Activated B cell treated with CpG ODN at 0.5 μM for 24 hours (primary cell): ENCODE measurements at regions of chr13 and their contacts with region 1.

Region 1: GRCh38 chr13:99269627-99270241 is 11.6 kb upstream of the GPR18 start:
- DNase-seq: no peak
- ATAC-seq: peak; percentile 70
- H3K4me3 Mint-ChIP-seq: no peak overlapping the region
- H3K27ac Mint-ChIP-seq: peak overlapping the region; percentile 74
- H3K4me1 Mint-ChIP-seq: peaks cover 65% of the 10 kb centered on the region
- H3K27me3 Mint-ChIP-seq: no peaks in the 10 kb centered on the region
- CTCF ChIP-seq: peak; percentile 48

Region 2: GRCh38 chr13:98842864-98843481 is 426.8 kb before region 1 on chr13:
- CTCF ChIA-PET with region 1: interaction called, 19 read pairs
- POLR2A ChIA-PET with region 1: no interaction called
- intact Hi-C with region 1: loop called (anchors 1 kb)
- DNase-seq: peak; percentile 34
- ATAC-seq: peak; percentile 86
- H3K4me3 Mint-ChIP-seq: no peak overlapping the region
- H3K27ac Mint-ChIP-seq: no peak overlapping the region
- H3K4me1 Mint-ChIP-seq: no peaks in the 10 kb centered on the region
- H3K27me3 Mint-ChIP-seq: no peaks in the 10 kb centered on the region
- CTCF ChIP-seq: peak; percentile 37

Region 3: GRCh38 chr13:98927951-98928927 is 341.5 kb before region 1 on chr13:
- CTCF ChIA-PET with region 1: no interaction called
- POLR2A ChIA-PET with region 1: no interaction called
- intact Hi-C with region 1: no loop called
- DNase-seq: no peak
- ATAC-seq: no peak
- H3K4me3 Mint-ChIP-seq: no peak overlapping the region
- H3K27ac Mint-ChIP-seq: no peak overlapping the region
- H3K4me1 Mint-ChIP-seq: peaks cover 7% of the 10 kb centered on the region
- H3K27me3 Mint-ChIP-seq: no peaks in the 10 kb centered on the region
- CTCF ChIP-seq: no peak

Region 4: DNA sequence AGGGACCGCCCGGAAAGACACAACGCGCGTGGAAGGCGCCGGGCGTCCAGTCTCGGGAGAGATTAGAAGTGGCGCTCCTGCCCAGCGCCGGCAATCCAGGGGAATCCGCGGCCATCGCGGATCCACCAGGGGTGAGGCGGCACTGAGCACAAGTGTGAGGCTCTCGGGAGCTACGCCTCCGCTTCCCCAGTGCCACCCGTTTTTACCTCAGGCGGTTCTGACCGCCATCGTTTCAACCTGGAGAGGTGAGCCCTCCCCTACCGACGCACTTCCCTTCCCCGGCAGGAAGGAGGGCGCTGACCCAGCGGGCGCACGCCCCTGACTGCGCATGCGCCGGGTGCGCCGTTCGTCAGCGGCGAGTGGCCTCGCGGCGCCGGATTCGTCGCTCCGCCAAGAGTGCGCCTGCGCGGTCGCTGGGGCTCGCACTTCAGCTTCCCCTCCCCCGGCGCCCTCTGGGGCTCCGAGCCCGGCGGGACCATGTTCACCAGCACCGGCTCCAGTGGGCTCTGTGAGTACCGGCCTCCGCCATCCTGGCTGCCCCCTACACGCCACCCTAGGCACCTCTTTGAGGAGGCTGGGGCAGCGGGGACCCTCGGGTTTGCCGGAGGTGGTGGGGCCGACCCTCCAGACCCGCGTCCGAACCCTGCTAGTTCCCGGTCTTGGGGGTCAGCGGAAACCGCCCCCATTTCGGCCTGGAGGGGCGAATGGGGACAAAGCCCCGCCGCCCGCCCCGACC is 69.1 kb before region 1 on chr13 and contains the start of gene UBAC2:
- CTCF ChIA-PET with region 1: interaction called, 157 read pairs
- POLR2A ChIA-PET with region 1: interaction called, 77 read pairs
- intact Hi-C with region 1: loop called (anchors 1 kb)
- DNase-seq: peak; percentile 98
- ATAC-seq: peak; percentile 74
- H3K4me3 Mint-ChIP-seq: peak within 1 kb of the TSS; percentile 95
- H3K27ac Mint-ChIP-seq: peak within 1 kb of the TSS; percentile 94
- H3K4me1 Mint-ChIP-seq: peaks cover 59% of the 10 kb centered on the region
- H3K27me3 Mint-ChIP-seq: no peaks in the 10 kb centered on the region
- CTCF ChIP-seq: no peak
- total RNA-seq, gene UBAC2: 40.6 and 51.0 TPM in 2 replicates

Region 5: GRCh38 chr13:99301913-99302636 is 32.3 kb after region 1 on chr13:
- CTCF ChIA-PET with region 1: interaction called, 43 read pairs
- POLR2A ChIA-PET with region 1: interaction called, 22 read pairs
- intact Hi-C with region 1: loop called (anchors 1 kb)
- DNase-seq: no peak
- ATAC-seq: peak; percentile 56
- H3K4me3 Mint-ChIP-seq: peak overlapping the region; percentile 95
- H3K27ac Mint-ChIP-seq: peak overlapping the region; percentile 93
- H3K4me1 Mint-ChIP-seq: peaks cover 83% of the 10 kb centered on the region
- H3K27me3 Mint-ChIP-seq: no peaks in the 10 kb centered on the region
- CTCF ChIP-seq: no peak

Region 6: DNA sequence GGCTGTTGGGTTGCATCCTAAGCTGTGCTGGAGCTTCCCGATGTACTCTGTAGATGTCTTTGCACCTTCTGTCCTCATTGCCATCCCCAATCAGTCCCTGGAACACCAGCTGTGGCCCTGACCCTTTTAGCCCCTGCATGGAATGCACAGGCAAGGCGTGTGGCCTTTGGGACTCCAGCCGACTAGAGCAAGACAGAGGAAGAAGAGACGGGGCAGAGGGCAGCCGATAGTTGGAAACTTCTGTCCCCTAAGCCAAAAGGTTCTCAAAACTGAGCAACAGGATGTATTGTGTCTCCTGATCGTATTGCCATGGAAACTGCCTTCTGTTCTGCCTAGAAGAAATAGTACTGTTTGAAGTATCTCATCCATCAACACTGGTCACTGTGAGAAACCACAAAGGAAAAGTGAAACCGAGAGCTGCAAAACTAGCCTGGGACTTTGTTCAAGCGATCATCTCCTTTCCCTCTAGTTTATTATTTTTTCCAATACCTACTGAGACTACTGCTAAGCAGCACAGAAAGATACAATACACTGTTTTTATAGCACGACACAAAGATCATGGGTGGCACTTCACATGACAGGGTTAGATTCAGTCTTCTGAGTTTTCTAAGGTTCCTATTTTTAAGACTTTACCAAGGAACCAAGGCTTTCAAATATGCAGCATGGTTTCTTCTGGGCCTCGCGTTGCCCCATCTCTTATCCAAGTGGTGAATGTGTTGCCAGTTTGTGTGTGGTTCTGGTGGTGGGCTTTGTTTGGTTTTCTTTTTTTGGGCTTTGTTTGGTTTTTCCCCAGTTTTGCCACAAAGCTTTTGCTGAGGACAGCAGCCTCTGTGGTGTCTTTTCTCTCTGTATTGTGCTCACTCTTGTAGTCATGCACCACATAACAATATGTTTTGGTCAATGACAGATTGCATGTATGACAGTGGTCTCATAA is 86.7 kb after region 1 on chr13:
- CTCF ChIA-PET with region 1: interaction called, 10 read pairs
- POLR2A ChIA-PET with region 1: interaction called, 4 read pairs
- intact Hi-C with region 1: loop called (anchors 1 kb)
- DNase-seq: peak; percentile 40
- ATAC-seq: peak; percentile 49
- H3K4me3 Mint-ChIP-seq: peak overlapping the region; percentile 70
- H3K27ac Mint-ChIP-seq: peak overlapping the region; percentile 94
- H3K4me1 Mint-ChIP-seq: peaks cover 97% of the 10 kb centered on the region
- H3K27me3 Mint-ChIP-seq: no peaks in the 10 kb centered on the region
- CTCF ChIP-seq: no peak

Region 7: DNA sequence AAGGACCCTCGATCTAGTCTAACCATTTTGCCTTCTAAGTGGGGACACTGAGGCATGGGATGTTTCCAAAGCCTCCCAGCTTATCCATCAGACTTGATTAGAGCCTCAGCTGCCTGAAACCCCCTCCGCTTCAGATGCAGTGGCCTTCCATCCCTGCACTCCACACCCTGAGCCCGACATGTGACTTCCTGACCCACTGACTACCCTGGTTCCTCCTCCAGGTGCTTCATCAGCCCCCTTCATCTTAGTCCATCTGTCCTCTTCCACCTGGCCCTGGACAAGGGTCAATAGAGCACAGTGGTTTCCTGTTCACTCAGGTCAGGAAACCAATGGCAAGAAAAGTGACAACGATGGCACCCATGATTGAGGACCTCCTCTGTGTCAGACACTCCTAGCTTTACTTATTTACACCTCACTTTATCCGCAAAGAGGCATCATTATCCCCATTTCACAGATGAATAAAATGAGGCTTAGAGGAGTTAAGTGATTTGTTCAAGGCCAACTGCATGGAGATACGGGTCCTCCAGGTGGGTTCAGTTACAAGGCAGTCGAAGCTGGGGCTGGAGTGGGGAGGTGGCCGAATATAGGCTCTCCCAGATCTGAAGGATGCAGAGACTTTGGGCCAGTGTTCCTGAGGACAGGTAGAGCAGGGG is 150.0 kb after region 1 on chr13:
- CTCF ChIA-PET with region 1: interaction called, 10 read pairs
- POLR2A ChIA-PET with region 1: interaction called, 4 read pairs
- intact Hi-C with region 1: loop called (anchors 1 kb)
- DNase-seq: no peak
- ATAC-seq: no peak
- H3K4me3 Mint-ChIP-seq: peak overlapping the region; percentile 80
- H3K27ac Mint-ChIP-seq: peak overlapping the region; percentile 96
- H3K4me1 Mint-ChIP-seq: peaks cover 72% of the 10 kb centered on the region
- H3K27me3 Mint-ChIP-seq: no peaks in the 10 kb centered on the region
- CTCF ChIP-seq: no peak

Region 8: DNA sequence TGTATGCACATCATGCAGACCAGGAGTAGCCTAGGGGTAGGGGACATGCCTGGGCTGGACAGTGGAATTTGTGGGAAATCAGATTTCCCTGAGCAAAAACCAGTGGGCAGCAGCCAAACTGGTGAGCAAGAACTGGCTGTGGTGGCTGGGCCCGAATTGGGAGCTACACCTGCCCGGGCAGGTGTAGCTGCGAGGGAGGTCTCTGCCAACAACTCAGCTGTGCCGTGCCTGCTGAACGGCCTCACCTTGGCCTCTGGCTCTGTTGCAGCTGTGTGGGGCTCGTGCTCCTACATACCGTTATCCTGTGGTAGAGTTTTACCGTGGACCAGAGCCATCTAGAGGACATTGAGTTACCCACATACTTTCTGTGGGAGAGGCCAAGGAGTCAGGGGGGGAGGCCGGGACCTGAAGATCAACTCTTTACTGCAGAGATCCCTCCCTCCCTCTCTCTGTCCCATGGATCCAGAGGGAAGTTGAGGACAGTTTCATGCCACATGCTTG is 344.7 kb after region 1 on chr13:
- CTCF ChIA-PET with region 1: interaction called, 11 read pairs
- POLR2A ChIA-PET with region 1: no interaction called
- intact Hi-C with region 1: loop called (anchors 5 kb)
- DNase-seq: no peak
- ATAC-seq: peak; percentile 98
- H3K4me3 Mint-ChIP-seq: no peak overlapping the region
- H3K27ac Mint-ChIP-seq: no peak overlapping the region
- H3K4me1 Mint-ChIP-seq: peaks cover 26% of the 10 kb centered on the region
- H3K27me3 Mint-ChIP-seq: no peaks in the 10 kb centered on the region
- CTCF ChIP-seq: no peak

Region 9: DNA sequence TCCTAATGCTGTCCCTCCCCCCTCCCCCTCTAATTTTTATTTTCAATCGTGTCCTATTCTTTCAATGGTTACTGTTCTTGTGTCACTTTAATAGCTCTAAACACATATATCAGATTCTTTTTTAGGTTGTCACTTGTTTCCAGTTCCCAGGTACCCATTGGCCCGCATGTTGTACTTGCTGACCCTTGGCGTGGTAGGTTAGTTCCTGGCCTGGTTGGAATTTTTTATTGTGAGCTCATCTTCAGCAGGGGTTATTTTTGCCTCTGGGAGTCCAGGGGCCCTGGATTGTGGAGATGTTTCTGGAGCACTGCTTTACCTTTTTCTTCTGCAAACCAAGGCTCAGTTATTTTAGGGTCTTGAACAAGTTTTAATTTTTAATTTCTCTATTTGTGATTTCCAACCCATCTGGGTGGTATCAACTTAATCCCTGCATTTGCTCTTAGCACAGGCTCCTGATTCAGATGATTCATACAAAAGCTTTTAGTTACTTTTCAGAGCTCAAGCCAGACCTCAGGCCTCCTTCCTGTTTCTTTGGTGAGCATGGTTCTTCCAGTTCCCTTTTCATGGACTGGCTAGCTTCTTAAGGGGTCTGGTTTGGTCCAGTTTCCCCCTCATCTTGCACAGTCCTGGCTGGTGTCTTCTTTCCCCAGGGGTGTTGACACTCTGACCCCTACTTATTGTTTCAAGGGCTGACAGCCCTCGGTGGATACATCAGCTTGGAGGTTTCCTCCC is 452.0 kb after region 1 on chr13:
- CTCF ChIA-PET with region 1: no interaction called
- POLR2A ChIA-PET with region 1: no interaction called
- intact Hi-C with region 1: no loop called
- DNase-seq: no peak
- ATAC-seq: no peak
- H3K4me3 Mint-ChIP-seq: no peak overlapping the region
- H3K27ac Mint-ChIP-seq: no peak overlapping the region
- H3K4me1 Mint-ChIP-seq: peaks cover 4% of the 10 kb centered on the region
- H3K27me3 Mint-ChIP-seq: no peaks in the 10 kb centered on the region
- CTCF ChIP-seq: no peak